ENCODE measurements at regions of chr6 and their contacts with region 1.

Region 1: GRCh38 chr6:24646782-24647181 is 791 bp upstream of the KIAA0319 start:
- DNase-seq: no peak
- ATAC-seq: no peak
- H3K4me3 ChIP-seq: no peak overlapping the region
- H3K4me3 Mint-ChIP-seq: peak overlapping the region; percentile 95
- H3K27ac ChIP-seq: peak overlapping the region in 1 of 2 donors; percentile 75
- H3K27ac Mint-ChIP-seq: peak overlapping the region; percentile 98
- H3K4me1 ChIP-seq: peaks cover 10 to 15% of the 10 kb centered on the region in 2 donors
- H3K4me1 Mint-ChIP-seq: peaks cover 27% of the 10 kb centered on the region
- H3K27me3 ChIP-seq: no peaks in the 10 kb centered on the region
- H3K27me3 Mint-ChIP-seq: no peaks in the 10 kb centered on the region
- CTCF ChIP-seq: no peak

Region 2: DNA sequence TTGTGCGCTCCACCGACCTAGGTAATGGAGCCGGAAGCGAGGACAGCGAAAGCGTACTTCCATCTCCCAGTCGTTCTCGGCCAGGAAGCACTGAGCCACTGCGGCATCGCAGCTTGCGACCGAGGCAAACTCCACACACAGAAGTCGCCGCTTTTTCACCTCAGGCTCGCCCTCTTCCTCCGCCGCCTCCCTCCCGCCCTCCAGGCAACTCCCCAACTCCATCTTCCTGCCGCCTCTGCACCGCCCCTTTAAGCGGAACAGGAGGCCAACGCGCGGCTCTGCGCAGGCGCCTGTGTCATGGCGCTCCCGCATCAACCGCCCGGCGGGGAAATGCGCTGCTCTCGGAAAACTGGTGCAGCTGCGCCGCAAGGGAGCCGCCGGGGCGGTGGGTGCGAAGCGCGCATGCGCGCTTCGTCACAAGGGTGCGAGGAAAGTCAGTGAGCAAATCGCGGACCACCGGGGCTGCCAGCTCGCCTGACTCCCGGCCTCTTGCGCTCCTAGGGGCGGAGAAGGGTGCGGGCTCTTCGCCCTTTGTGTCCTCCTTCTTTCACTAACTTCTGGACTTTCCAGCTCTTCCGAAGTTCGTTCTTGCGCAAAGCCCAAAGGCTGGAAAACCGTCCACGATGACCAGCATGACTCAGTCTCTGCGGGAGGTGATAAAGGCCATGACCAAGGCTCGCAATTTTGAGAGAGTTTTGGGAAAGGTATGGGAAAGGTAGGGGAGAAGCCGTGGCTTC is 20.0 kb after region 1 on chr6 and contains the starts of genes ACOT13 and TDP2:
- CTCF ChIA-PET with region 1: interaction called, 9 read pairs
- POLR2A ChIA-PET with region 1: interaction called, 17 read pairs
- intact Hi-C with region 1: loop called (anchors 1 kb)
- DNase-seq: peak; percentile 98
- ATAC-seq: peak; percentile 94
- H3K4me3 ChIP-seq: peak within 1 kb of the TSS; percentile 74 to 100 (median 96)
- H3K4me3 Mint-ChIP-seq: peak within 1 kb of the TSS; percentile 99
- H3K27ac ChIP-seq: peak within 1 kb of the TSS; percentile 75 to 82
- H3K27ac Mint-ChIP-seq: peak within 1 kb of the TSS; percentile 98
- H3K4me1 ChIP-seq: peaks cover 22 to 23% of the 10 kb centered on the region in 2 donors
- H3K4me1 Mint-ChIP-seq: peaks cover 46% of the 10 kb centered on the region
- H3K27me3 ChIP-seq: no peaks in the 10 kb centered on the region
- H3K27me3 Mint-ChIP-seq: no peaks in the 10 kb centered on the region
- CTCF ChIP-seq: peak; percentile 67
- total RNA-seq, gene ACOT13: 5.7 and 6.6 TPM in 2 replicates
- total RNA-seq, gene TDP2: 63.5 and 68.1 TPM in 2 replicates

Measured in B cell (primary cell).